Posterior vena cava (tissue), 2 donors: ENCODE measurements at regions of chr11 and their contacts with region 1.

Region 1: GRCh38 chr11:122108192-122108799 is 7.7 kb downstream of the BLID start:
- DNase-seq: no peak

Region 2: DNA sequence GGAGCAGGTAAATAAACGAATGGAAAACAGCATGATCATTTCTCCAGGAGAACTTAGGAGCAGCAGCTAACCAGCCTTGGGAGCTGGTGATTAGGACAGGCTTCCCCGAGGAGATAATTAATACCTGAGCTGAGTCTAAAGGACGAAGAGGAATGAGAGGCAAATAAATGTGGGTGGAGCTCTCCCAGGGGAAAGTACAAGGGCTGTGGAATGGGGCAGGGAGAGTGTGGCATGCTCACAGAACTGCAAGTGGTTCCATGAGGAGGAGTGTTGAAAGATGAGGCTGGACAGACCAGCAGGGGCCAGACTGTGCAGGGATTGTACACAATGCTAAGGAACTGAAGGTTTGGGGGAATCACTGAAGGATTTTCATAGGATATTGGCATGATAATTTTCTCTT is 1797.4 kb before region 1 on chr11:
- intact Hi-C with region 1: loop called in 1 of 2 experiments (anchors 5 kb)
- DNase-seq: no peak

Region 3: DNA sequence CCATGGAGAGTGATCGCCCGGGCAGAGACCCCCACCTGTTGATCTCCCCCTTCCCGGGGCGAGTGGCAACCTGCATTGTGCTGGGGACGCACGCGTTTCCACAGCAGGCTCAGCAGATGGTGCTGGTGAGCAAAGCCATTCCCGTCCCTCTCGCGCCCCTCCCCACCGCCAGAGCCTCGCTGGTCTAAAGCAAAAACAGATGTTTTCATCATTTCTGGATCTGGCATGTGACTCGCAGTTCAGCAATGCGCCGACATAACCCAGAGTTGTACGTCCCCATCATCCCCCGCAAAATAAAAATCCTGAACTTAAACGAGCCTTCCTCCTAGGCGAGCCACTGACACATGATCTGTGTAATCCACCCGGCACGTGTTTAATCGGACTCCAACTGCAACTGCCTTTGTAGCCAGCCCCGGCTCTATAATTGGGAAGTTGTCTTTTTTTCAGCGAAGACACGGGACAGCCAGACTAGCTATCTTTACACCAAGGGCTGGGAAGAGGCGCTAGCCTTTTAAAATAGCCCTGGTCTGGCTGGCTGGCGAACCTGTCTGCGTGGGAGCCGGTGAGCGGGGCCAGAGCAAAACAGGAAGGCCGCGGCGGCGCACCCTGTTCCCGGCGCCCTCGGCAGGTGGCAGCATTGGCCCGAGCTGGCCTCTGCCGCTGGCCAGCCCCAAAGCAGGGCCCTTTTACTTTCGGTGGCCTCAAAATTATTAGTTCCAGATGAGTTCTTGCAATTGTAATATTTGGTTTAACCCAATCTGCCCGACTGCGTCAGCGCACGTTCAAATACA is 452.6 kb before region 1 on chr11:
- intact Hi-C with region 1: loop called (anchors 5 to 10 kb)
- DNase-seq: peak; percentile 97

Region 4: DNA sequence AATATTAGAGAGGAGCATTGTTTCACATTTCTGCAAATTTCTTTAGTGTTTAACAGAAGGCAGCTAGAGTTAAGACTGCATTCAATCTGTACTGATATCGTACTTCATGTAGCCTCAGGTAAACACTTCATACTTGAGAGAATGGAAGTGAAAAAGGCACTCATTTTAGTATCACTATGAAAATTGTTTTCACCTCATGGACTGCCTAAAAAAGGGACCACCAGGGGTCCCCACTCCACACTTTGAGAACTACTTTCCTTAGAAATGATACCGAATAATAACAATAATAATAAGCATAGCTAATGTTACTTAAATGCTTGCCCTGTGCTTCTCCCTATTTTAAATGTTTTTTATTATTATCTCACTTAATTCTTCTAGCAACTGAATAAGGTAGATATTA is 87.4 kb before region 1 on chr11:
- intact Hi-C with region 1: loop called in 1 of 2 experiments (anchors 10 kb)
- DNase-seq: no peak

Region 5: GRCh38 chr11:122853971-122854446 is 745.7 kb after region 1 on chr11:
- intact Hi-C with region 1: no loop called
- DNase-seq: no peak